Calu3 (cell line): ENCODE measurements at regions of chr1 and their contacts with region 1.

Region 1: DNA sequence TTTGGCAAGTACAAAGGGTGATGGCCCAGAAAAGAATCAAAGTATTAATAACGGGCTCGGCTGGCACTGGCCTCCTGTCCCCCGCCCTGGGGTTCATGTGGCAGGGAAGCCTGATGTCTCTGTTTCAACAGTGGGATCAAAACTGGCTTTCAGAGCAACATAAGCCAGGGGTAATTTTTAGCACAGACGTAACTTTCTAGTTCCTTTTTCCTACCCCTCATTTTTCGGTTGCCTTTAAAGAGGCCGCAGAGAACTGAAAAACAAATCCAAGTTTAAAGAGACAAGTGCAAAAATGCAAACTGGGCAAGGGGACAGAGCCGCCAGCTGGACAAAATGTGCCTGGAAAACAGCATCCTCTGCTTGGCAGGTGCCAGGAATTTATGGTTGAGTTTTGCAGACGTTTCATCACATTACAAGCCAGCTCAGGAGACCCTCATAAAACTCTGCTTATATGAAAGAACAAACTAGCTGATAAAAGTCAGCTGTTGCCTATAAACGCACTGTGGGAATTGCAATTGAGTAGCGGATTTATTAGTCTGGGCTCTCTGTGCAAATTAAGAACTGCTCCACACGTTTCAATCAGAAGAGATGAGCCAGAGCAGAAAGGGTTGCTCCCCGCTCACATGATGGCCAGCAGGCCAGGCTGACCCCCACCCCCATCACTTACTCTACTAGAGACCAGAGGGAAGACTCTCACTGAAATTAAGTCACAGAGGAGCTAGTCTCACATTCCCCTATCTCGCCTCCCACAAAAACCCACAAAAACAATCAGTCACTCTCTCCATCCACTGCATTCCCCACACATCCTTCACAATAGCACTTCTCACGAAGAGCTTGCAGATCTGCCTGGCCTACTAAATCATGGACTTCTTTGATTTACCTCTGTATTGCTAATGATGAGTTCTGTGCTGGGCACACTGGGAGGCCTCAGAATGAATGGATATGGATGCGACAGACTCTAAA is 15.8 kb upstream of the CDCA8 start:
- DNase-seq: no peak
- H3K4me3 Mint-ChIP-seq: no peak overlapping the region
- H3K27ac Mint-ChIP-seq: no peak overlapping the region
- H3K4me1 Mint-ChIP-seq: no peaks in the 10 kb centered on the region
- H3K27me3 Mint-ChIP-seq: peaks cover 31% of the 10 kb centered on the region
- CTCF ChIP-seq: no peak

Region 2: GRCh38 chr1:37123266-37124115 is 553.1 kb before region 1 on chr1:
- CTCF ChIA-PET with region 1: no interaction called
- intact Hi-C with region 1: no loop called
- DNase-seq: no peak
- H3K4me3 Mint-ChIP-seq: no peak overlapping the region
- H3K27ac Mint-ChIP-seq: no peak overlapping the region
- H3K4me1 Mint-ChIP-seq: no peaks in the 10 kb centered on the region
- H3K27me3 Mint-ChIP-seq: peaks cover 94% of the 10 kb centered on the region
- CTCF ChIP-seq: no peak

Region 3: DNA sequence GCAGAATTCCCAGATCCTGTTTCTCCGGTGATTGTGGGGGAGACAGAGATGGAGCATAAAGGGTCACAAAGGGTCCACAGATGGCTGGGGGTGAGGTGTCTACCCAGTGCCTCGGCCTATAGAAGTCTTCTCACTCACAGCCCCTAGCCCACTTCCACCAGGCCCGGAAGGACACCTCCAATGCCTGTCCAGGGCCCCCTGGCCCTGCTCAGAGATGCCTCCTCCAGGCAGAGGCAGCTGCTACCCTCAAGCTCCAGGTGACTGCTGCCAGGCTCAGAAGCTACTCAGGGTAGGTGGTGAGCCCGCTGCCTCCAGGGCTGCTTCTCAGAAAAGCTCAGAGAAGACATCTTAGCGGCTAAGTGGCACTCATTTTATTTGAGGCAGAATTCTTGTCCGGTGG is 224.1 kb before region 1 on chr1:
- CTCF ChIA-PET with region 1: interaction called, 14 read pairs
- intact Hi-C with region 1: loop called (anchors 5 kb)
- DNase-seq: no peak
- H3K4me3 Mint-ChIP-seq: no peak overlapping the region
- H3K27ac Mint-ChIP-seq: no peak overlapping the region
- H3K4me1 Mint-ChIP-seq: peaks cover 9% of the 10 kb centered on the region
- H3K27me3 Mint-ChIP-seq: no peaks in the 10 kb centered on the region
- CTCF ChIP-seq: no peak

Region 4: DNA sequence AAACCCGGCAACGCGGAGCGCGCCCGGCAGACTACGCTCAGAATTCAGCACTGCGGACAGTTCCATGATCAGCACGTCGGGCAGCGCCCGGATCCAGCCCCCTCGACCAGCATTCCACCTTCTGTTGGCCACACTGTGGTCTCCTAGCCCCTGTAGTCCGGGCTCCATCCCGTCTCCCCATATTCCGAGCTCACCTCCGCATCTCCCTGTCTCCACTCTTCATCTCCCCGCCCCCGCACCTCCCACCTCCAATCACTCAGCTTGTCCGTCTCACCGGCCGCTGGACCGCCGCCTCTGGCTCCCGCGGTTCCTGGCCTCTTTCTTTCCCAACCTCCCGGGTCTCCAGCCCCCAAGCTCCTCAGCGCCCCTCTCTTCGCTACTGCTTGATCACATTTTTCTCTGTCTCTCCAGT is 87.9 kb after region 1 on chr1:
- CTCF ChIA-PET with region 1: no interaction called
- intact Hi-C with region 1: no loop called
- DNase-seq: peak; percentile 44
- H3K4me3 Mint-ChIP-seq: peak overlapping the region; percentile 58
- H3K27ac Mint-ChIP-seq: no peak overlapping the region
- H3K4me1 Mint-ChIP-seq: no peaks in the 10 kb centered on the region
- H3K27me3 Mint-ChIP-seq: peaks cover 76% of the 10 kb centered on the region
- CTCF ChIP-seq: no peak

Region 5: DNA sequence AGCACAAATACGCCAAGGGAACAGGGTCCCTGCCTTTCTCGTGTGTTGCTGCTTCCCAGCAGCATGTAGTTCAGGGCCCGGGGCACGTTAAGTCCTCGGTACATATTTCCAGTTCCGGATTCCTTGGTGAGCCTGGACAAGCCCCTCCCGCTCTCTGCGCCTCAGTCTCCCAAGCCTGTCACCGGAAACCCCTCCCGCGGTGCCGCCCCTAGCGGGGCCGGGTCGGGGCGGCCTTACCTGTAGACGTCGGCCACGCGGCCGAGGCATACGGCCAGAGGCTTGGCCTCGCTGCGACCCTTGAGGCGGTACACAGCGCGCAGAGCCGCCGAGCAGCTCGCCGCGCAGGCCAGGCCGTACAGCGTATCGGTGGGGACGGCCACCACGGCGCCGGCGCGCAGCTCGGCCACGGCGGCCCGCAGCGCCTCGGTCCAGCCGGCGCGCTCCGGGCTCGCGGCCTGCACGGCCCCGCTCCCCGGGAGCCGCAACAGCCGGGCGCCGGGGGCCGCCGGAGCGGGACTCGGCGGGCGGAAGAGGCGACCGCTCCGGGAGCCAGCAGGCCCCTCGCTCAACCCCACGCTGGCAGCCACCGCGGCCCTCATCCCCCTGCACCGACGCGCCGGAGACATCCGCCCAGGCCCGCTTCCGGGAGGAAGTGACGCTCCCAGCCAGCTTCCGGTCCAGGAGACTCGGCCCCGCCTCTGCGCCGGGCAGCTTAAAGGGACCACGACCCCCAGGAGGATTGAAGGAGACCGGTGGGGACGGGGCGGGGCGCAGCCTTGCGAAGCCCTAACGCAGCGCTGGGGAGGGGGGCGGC is 131.2 kb after region 1 on chr1 and contains the starts of genes C1orf122 and YRDC:
- CTCF ChIA-PET with region 1: interaction called, 10 read pairs
- intact Hi-C with region 1: no loop called
- DNase-seq: peak; percentile 96
- H3K4me3 Mint-ChIP-seq: peak within 1 kb of the TSS; percentile 95
- H3K27ac Mint-ChIP-seq: peak within 1 kb of the TSS; percentile 96
- H3K4me1 Mint-ChIP-seq: peaks cover 13% of the 10 kb centered on the region
- H3K27me3 Mint-ChIP-seq: no peaks in the 10 kb centered on the region
- CTCF ChIP-seq: no peak
- total RNA-seq, gene C1orf122: 41.3 and 43.6 TPM in 2 replicates
- total RNA-seq, gene YRDC: 18.6 and 18.8 TPM in 2 replicates